ENCODE measurements at regions of chr10 and their contacts with region 1.

Region 1: DNA sequence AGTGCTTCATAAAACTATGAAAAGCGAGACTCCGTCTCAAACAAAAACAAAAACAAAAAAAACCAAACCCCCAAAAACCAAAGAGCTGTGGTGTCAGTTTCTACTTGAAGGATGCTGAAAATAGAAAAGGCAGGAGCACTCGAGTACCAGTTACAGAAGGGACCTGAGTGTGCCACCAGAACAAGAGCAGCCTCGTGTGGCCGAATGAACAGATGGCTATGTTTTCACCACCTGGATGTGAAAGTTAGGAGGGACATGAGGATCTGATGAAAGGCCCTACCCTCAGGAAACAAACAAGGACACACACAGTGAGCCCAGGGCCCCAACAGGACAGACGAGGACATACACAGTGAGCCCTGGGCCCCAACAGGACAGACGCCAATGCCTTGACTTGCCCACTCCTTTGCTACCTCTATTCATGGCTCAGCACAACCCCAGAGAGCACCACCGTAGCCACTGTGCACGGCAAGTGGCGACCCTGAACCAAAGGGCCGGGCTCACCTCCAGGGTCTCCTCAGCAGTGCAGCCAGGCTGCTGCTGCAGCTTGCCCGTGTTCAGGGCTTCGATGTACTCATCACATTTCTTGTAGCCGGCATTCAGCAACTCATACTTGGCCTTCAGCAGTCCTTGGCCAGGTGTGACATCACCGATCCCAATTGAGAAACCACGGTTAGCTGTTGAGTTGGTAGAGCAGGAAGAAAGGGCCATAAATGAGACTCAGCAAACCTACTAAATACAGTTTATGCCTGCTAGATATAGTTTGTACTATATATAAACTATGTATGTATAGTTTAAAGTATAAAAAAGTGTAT is 24.9 kb downstream of the POLR3A start:
- DNase-seq: peak; percentile 46 to 74
- ATAC-seq: peak; percentile 64 to 68
- H3K4me3 ChIP-seq: no peak overlapping the region
- H3K27ac ChIP-seq: peak overlapping the region; percentile 77 to 89 (median 87)
- H3K4me1 ChIP-seq: peaks cover 6 to 55% of the 10 kb centered on the region in 2 donors
- H3K27me3 ChIP-seq: no peaks in the 10 kb centered on the region
- CTCF ChIP-seq: peak in 4 of 5 experiments; percentile 20 to 60 (median 52)
- POLR2A ChIP-seq: no peak

Region 2: GRCh38 chr10:77603534-77603927 is 400.9 kb before region 1 on chr10:
- in situ Hi-C with region 1: no loop called
- intact Hi-C with region 1: no loop called
- DNase-seq: peak; percentile 59 to 81
- ATAC-seq: peak; percentile 65 to 73
- H3K4me3 ChIP-seq: peak overlapping the region in 1 of 4 donors; percentile 5
- H3K27ac ChIP-seq: peak overlapping the region; percentile 72 to 85 (median 80)
- H3K4me1 ChIP-seq: peaks cover 32 to 53% of the 10 kb centered on the region in 2 donors
- H3K27me3 ChIP-seq: no peaks in the 10 kb centered on the region
- CTCF ChIP-seq: no peak
- POLR2A ChIP-seq: peak in 1 of 2 donors; percentile 17

Region 3: DNA sequence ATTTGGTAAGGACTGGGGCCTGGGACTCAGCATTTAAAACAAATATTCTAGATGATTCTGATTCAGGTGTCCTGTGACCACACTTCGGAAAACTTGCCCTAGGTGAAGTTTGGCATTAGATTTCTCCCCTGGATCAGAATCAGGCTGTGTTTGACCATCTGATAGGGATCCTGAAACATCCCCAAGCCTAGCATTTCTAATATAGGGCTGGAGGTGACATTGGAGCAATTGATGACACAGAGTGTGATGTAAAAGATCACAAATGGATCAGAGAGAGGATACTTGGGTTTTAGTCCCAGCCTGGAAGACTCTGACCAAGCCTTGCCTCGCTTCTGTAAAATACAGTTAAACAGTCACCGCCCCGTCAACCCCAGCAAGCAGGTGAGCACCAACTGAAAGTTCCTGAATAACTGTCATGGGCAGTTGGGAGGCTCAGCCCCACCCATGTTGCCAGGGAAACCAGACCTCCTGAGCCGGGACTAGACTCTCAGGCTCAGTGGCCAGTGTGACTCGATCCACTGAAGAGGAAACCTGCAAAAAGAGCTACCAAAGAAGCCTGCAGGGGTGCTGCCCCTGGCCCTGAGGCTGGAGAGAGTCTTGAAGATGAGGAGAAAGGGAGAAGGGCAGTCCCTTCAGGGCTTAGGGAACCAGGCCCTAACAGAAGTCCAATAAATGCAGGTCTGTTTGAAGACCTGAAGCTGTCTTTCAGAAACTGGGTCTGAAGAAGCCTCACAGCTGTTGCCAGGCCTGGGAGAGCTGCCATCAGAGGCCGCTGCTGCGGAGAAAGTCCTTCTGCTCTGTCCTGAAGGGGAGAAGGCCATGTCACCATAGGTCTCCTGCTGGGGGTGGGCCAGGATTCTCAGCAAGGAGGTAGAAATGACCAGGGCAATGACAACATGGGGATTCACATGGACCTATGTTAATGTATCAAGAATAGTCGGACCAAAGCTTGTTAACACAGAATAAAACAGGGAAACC is 240.7 kb before region 1 on chr10:
- in situ Hi-C with region 1: no loop called
- intact Hi-C with region 1: no loop called
- DNase-seq: no peak
- ATAC-seq: peak; percentile 47 to 63
- H3K4me3 ChIP-seq: no peak overlapping the region
- H3K27ac ChIP-seq: no peak overlapping the region
- H3K4me1 ChIP-seq: no peaks in the 10 kb centered on the region
- H3K27me3 ChIP-seq: no peaks in the 10 kb centered on the region
- CTCF ChIP-seq: no peak
- POLR2A ChIP-seq: no peak

Region 4: GRCh38 chr10:77890097-77890496 is 114.3 kb before region 1 on chr10:
- in situ Hi-C with region 1: no loop called
- intact Hi-C with region 1: loop called (anchors 5 kb)
- DNase-seq: no peak
- ATAC-seq: no peak
- H3K4me3 ChIP-seq: no peak overlapping the region
- H3K27ac ChIP-seq: peak overlapping the region; percentile 75 to 80 (median 76)
- H3K4me1 ChIP-seq: peaks cover 82 to 84% of the 10 kb centered on the region in 2 donors
- H3K27me3 ChIP-seq: no peaks in the 10 kb centered on the region
- CTCF ChIP-seq: no peak
- POLR2A ChIP-seq: no peak

Region 5: DNA sequence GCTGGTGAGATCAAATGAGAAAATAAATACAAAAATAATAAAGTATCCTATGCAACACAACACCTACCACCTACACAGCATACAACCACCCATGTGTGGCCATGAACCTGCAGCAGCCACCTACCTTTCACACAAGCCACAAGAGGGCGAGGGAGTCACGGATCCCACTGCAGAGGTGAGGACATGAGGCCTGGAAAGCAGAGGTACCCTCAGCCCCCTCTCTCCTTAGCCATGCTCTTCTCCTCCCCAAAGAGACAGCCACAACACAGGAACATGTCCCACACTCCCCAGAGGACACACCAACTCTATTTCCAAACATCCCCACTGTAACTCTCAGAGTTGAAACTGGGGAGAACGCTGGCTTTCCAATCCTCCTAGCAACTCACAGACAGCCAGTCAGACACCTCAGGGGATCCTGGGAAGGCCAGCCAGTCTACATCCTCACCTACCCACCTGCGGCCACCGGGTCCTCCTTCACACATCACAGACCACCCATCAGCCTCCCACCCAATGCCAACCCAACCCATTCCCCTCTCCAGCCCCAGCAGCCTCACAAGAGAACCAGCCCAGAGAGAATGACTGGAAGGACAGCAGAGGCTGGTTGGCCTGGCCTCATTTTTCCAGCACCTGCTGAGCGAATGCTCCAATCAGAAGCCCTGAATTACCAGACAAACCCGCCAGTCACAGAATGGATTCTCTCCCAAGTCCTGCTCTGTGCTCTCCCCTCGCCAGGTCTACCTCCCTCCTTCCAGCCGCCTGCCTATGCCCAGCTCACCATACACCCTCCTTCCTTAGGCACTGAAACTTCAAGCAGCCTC is 96.3 kb before region 1 on chr10:
- in situ Hi-C with region 1: no loop called
- intact Hi-C with region 1: loop called (anchors 5 kb)
- DNase-seq: peak in 1 of 2 donors; percentile 39
- ATAC-seq: peak; percentile 36 to 42
- H3K4me3 ChIP-seq: no peak overlapping the region
- H3K27ac ChIP-seq: peak overlapping the region in 2 of 4 donors; percentile 11 to 15
- H3K4me1 ChIP-seq: peaks cover 58 to 59% of the 10 kb centered on the region in 2 donors
- H3K27me3 ChIP-seq: no peaks in the 10 kb centered on the region
- CTCF ChIP-seq: peak in 3 of 5 experiments; percentile 28 to 41 (median 29)
- POLR2A ChIP-seq: no peak